ENCODE measurements at regions of chr17 and their contacts with region 1.

Region 1: GRCh38 chr17:54426296-54426886 is 474.3 kb upstream of the TOM1L1 start:
- DNase-seq: peak; percentile 46
- H3K4me3 ChIP-seq: no peak overlapping the region
- H3K27ac ChIP-seq: no peak overlapping the region
- H3K4me1 ChIP-seq: no peaks in the 10 kb centered on the region
- H3K27me3 ChIP-seq: no peaks in the 10 kb centered on the region
- CTCF ChIP-seq: peak; percentile 82 to 83

Region 2: DNA sequence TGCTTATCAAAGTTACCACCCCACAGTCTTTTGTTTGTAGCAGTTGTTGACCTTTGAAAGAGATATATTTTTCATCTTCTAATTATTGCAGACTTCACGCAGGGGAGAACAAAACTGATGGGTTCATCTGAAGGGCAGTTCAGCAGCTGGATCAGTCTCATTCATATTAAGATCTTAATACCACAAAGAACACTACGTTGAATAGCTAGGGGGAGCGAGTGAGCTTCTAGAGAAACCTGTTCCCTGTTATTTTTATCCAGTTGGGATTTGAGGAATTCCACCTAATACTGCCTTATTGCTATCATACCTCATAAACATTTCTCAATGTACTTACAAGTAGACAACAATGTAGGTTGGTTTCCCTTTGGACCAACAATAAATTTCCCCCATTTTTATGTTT is 909.8 kb before region 1 on chr17:
- CTCF ChIA-PET with region 1: interaction called, 14 read pairs
- dilution Hi-C with region 1: no loop called
- in situ Hi-C with region 1: no loop called
- intact Hi-C with region 1: no loop called
- DNase-seq: peak; percentile 5
- H3K4me3 ChIP-seq: no peak overlapping the region
- H3K27ac ChIP-seq: no peak overlapping the region
- H3K4me1 ChIP-seq: no peaks in the 10 kb centered on the region
- H3K27me3 ChIP-seq: no peaks in the 10 kb centered on the region
- CTCF ChIP-seq: peak; percentile 27 to 62

Region 3: GRCh38 chr17:53707566-53707965 is 718.8 kb before region 1 on chr17:
- CTCF ChIA-PET with region 1: no interaction called
- dilution Hi-C with region 1: no loop called
- in situ Hi-C with region 1: no loop called
- intact Hi-C with region 1: loop called (anchors 10 kb)
- DNase-seq: no peak
- H3K4me3 ChIP-seq: no peak overlapping the region
- H3K27ac ChIP-seq: no peak overlapping the region
- H3K4me1 ChIP-seq: no peaks in the 10 kb centered on the region
- H3K27me3 ChIP-seq: no peaks in the 10 kb centered on the region
- CTCF ChIP-seq: no peak

Region 4: GRCh38 chr17:54891176-54891821 is 464.9 kb after region 1 on chr17:
- CTCF ChIA-PET with region 1: no interaction called
- dilution Hi-C with region 1: no loop called
- in situ Hi-C with region 1: no loop called
- intact Hi-C with region 1: loop called (anchors 10 kb)
- DNase-seq: peak; percentile 64
- H3K4me3 ChIP-seq: no peak overlapping the region
- H3K27ac ChIP-seq: no peak overlapping the region
- H3K4me1 ChIP-seq: peaks cover 3% of the 10 kb centered on the region
- H3K27me3 ChIP-seq: no peaks in the 10 kb centered on the region
- CTCF ChIP-seq: peak in 1 of 2 donors; percentile 51

Measured in mammary epithelial cell (primary cell).